Psoas muscle (tissue), 8 donors: ENCODE measurements at regions of chr4 and their contacts with region 1.

Region 1: GRCh38 chr4:13024147-13025105 is 459.7 kb downstream of the RAB28 start:
- DNase-seq: no peak
- ATAC-seq: no peak
- H3K4me3 ChIP-seq: no peak overlapping the region
- H3K27ac ChIP-seq: no peak overlapping the region
- H3K4me1 ChIP-seq: no peaks in the 10 kb centered on the region
- H3K27me3 ChIP-seq: no peaks in the 10 kb centered on the region
- CTCF ChIP-seq: no peak

Region 2: GRCh38 chr4:13007802-13008470 is 16.5 kb before region 1 on chr4:
- intact Hi-C with region 1: loop called in 1 of 2 experiments (anchors 1 kb)
- DNase-seq: no peak
- ATAC-seq: no peak
- H3K4me3 ChIP-seq: no peak overlapping the region
- H3K27ac ChIP-seq: no peak overlapping the region
- H3K4me1 ChIP-seq: no peaks in the 10 kb centered on the region
- H3K27me3 ChIP-seq: no peaks in the 10 kb centered on the region
- CTCF ChIP-seq: no peak

Region 3: DNA sequence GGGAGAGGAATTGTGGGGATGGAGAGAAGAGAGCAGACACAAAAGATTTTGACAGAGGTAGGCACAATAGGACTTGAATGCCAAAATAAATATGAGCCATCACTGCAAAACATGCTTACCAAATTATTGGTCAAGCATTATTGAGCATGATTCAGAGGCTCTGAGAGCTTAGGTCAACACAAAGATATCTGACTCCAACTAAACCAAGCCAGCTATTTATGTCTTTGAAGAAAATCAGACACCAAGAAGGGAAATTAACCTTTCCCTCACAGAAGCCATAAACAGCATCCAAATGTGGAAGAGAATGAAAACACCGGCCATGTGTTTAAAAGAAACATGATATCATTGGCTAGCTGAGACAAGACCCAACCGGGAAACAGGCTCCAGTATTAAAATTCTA is 136.5 kb after region 1 on chr4:
- intact Hi-C with region 1: no loop called
- DNase-seq: no peak
- ATAC-seq: peak in 1 of 4 donors; percentile 43
- H3K4me3 ChIP-seq: no peak overlapping the region
- H3K27ac ChIP-seq: no peak overlapping the region
- H3K4me1 ChIP-seq: no peaks in the 10 kb centered on the region
- H3K27me3 ChIP-seq: no peaks in the 10 kb centered on the region
- CTCF ChIP-seq: no peak

Region 4: GRCh38 chr4:13511101-13511500 is 486.7 kb after region 1 on chr4:
- intact Hi-C with region 1: no loop called
- DNase-seq: no peak
- ATAC-seq: no peak
- H3K4me3 ChIP-seq: no peak overlapping the region
- H3K27ac ChIP-seq: no peak overlapping the region
- H3K4me1 ChIP-seq: no peaks in the 10 kb centered on the region
- H3K27me3 ChIP-seq: peaks cover 0 to 14% (median 4%) of the 10 kb centered on the region in 3 donors
- CTCF ChIP-seq: no peak